Activated CD8-positive, alpha-beta T cell treated with anti-CD3 and anti-CD28 coated beads, Interleukin-2, amount 10 ng/mL, durations not matched to agents 7 days and 5 days (primary cell): ENCODE measurements at regions of chr11 and their contacts with region 1.

Region 1: GRCh38 chr11:124837491-124837856 is 27.8 kb upstream of the ROBO3 start:
- DNase-seq: no peak
- ATAC-seq: peak; percentile 29
- H3K4me3 Mint-ChIP-seq: no peak overlapping the region
- H3K27ac Mint-ChIP-seq: no peak overlapping the region
- H3K4me1 Mint-ChIP-seq: peaks cover 24% of the 10 kb centered on the region
- H3K27me3 Mint-ChIP-seq: peaks cover 61% of the 10 kb centered on the region

Region 2: DNA sequence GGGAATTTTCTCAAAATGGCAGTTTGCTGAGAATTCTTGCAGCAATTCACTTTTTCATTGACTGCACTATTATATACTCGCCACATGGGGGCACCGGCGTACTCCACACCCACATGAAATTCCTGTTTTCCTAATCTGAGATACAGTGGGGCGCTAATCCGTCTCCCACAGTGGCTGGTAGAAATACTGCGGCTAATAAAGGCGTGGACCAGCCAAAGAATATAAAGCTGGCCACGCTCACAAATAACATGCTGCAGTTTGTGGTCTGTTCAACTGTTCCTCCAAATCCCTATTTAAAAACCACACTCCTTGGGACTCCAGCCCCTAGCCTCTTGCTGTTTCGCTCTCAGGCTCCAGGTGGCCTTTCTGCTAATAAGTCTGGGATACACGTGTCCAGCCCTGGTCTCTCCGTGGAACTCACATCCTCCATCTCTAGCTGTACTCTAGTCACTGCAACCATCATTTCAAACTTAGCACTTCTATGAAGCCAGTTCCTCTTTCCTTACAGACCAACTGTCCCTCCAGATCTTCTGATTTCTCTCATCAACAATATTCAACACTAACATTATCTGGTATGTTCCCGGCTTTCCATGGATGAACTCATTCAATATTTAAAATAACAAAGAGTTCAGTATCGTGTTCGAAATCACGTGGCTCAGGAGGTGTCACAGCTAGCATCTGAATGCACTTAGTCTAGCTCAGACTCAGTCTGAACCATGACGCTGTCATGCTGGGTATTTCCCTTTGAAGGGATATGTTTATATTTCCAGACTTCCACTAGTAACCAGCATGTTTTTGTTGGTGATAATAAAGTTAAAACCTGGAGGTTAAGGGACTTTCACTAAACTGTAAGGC is 192.8 kb before region 1 on chr11:
- CTCF ChIA-PET with region 1: interaction called, 27 read pairs
- POLR2A ChIA-PET with region 1: no interaction called
- DNase-seq: peak; percentile 38
- ATAC-seq: peak; percentile 67
- H3K4me3 Mint-ChIP-seq: no peak overlapping the region
- H3K27ac Mint-ChIP-seq: no peak overlapping the region
- H3K4me1 Mint-ChIP-seq: no peaks in the 10 kb centered on the region
- H3K27me3 Mint-ChIP-seq: no peaks in the 10 kb centered on the region

Region 3: GRCh38 chr11:124793466-124794278 is 43.8 kb before region 1 on chr11:
- CTCF ChIA-PET with region 1: interaction called, 18 read pairs
- POLR2A ChIA-PET with region 1: interaction called, 3 read pairs
- DNase-seq: peak; percentile 44
- ATAC-seq: peak; percentile 64
- H3K4me3 Mint-ChIP-seq: no peak overlapping the region
- H3K27ac Mint-ChIP-seq: no peak overlapping the region
- H3K4me1 Mint-ChIP-seq: peaks cover 34% of the 10 kb centered on the region
- H3K27me3 Mint-ChIP-seq: no peaks in the 10 kb centered on the region

Region 4: GRCh38 chr11:124865921-124866583 is 28.6 kb after region 1 on chr11:
- CTCF ChIA-PET with region 1: interaction called, 19 read pairs
- POLR2A ChIA-PET with region 1: no interaction called
- DNase-seq: peak; percentile 60
- ATAC-seq: peak; percentile 57
- H3K4me3 Mint-ChIP-seq: no peak overlapping the region
- H3K27ac Mint-ChIP-seq: no peak overlapping the region
- H3K4me1 Mint-ChIP-seq: peaks cover 21% of the 10 kb centered on the region
- H3K27me3 Mint-ChIP-seq: peaks cover 89% of the 10 kb centered on the region

Region 5: DNA sequence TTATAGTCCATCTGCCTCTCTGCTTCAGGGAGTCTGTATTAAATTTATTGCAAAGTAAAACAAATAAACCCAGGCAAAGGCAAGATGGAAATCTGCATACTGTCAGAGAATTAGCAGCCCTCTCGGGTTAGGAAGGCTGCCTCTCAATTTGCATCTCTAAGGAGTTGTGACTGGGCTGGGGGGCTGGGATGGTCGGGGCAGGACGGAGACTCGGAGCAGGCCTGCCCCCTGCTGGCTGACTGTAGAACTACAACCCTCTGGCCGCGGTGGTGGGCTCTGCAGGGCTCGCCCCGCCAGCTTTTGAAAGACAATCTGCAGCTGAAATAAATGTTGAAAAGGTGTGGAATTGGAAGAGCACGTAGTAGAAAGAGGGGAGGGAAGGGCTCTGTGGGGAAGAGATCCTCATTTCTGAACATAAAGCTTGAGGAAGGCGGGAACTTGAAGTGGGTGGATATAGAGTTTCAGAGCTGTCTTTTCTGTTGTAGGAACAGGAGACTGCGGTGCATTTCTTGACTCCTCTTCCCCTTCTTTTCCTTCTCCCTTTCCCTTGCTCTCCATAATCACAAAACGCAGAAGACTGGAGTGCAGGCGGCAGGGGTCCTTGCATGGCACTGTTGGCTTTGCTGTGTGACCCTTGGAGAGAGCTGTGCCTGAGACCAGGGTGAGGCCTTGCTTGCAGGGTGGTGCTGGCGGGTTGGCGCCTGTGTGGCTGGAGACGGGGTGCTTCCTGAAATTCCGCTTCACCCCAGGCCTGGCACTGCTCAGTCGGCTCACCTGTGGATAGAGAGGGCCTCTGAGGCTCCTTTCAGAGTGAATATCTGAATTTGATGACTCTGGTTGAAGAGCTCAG is 304.4 kb after region 1 on chr11:
- CTCF ChIA-PET with region 1: interaction called, 12 read pairs
- POLR2A ChIA-PET with region 1: no interaction called
- DNase-seq: peak; percentile 63
- ATAC-seq: peak; percentile 89
- H3K4me3 Mint-ChIP-seq: no peak overlapping the region
- H3K27ac Mint-ChIP-seq: no peak overlapping the region
- H3K4me1 Mint-ChIP-seq: no peaks in the 10 kb centered on the region
- H3K27me3 Mint-ChIP-seq: peaks cover 23% of the 10 kb centered on the region